Endothelial cell of umbilical vein (primary cell): ENCODE measurements at regions of chr3 and their contacts with region 1.

Region 1: DNA sequence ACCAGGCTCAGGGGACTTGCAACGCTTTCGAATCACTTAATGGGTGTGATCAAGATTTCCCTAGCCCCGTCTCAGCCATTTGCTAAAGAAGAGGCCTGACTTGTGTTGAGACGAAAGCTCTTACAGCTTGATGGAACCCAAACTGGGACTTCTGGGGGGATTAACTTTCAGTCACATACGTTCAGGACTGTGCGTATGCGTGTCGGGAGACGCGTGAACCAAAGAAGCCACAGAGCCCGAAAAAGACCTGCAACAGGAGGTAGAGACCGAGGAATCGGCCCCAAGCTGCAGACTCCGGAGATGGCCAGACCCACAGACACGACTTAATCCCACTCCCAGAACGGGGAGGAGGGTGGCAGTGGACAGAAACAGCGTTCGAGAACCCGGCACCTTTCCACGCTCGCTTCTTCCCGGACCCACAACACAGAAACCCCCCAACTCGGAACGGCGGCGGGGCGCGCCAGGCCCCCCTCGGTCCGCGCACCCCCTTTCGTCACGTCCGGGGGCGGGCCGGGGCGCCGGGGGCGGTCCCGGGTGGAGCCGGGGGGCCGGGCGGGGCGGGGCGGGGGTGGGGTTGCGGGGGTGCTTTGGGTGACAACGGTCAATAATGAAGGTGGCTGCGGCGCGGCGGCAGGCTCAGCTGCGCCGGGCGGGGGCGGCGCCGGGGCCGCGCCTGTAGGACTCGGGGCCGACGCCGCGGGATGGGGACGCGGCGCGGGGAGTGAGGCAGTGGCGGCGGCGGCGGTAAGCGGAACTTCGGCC is at the start of gene ATP11B:
- DNase-seq: peak; percentile 79
- H3K4me3 ChIP-seq: peak within 1 kb of the TSS; percentile 69 to 90 (median 74)
- H3K27ac ChIP-seq: peak within 1 kb of the TSS; percentile 74
- H3K4me1 ChIP-seq: peaks cover 32% of the 10 kb centered on the region
- H3K27me3 ChIP-seq: no peaks in the 10 kb centered on the region
- CTCF ChIP-seq: no peak
- POLR2A ChIP-seq: peak; percentile 80
- total RNA-seq, gene ATP11B: 49.3 and 62.3 TPM in 2 replicates

Region 2: DNA sequence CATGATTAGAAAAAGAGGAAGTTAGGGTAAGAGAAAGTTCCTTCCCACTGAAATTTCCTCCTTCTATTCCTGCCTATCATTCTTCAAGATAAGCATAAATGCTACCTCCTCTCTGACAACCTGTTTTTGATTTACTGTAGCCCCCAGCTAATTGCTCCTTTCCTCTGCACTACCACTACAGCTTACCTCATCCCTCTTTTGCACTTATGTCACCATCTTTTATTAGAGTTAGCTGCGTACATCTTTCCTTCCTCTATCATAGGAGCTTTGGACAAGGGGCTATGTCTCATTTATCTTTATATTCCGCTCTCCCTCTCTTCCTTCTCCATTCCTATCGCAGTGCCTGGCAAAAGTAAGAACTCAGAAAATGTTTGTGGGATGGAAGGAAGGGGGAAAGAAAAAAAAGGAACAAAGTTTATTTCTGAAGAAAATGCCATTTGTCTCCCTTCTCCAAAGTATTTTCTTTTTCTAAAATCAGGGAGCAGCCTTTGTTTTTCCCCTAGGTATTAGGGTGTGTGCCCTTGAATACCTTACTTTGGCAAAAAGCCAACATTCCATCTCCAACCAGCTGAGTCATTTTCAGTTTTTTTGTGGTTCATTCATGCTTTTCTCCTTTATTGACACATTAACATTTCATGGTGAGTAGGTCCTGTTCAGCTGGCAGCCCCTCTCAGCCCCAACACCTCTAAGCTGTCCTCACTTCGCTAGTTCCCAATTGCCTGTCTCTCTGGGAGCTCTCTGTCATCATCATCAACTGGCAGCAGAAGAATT is 1169.0 kb before region 1 on chr3:
- CTCF ChIA-PET with region 1: no interaction called
- POLR2A ChIA-PET with region 1: no interaction called
- dilution Hi-C with region 1: no loop called
- intact Hi-C with region 1: loop called (anchors 10 kb)
- DNase-seq: peak; percentile 81
- H3K4me3 ChIP-seq: peak overlapping the region in 1 of 3 experiments; percentile 26
- H3K27ac ChIP-seq: peak overlapping the region; percentile 88
- H3K4me1 ChIP-seq: peaks cover 42% of the 10 kb centered on the region
- H3K27me3 ChIP-seq: no peaks in the 10 kb centered on the region
- CTCF ChIP-seq: no peak
- POLR2A ChIP-seq: no peak

Region 3: DNA sequence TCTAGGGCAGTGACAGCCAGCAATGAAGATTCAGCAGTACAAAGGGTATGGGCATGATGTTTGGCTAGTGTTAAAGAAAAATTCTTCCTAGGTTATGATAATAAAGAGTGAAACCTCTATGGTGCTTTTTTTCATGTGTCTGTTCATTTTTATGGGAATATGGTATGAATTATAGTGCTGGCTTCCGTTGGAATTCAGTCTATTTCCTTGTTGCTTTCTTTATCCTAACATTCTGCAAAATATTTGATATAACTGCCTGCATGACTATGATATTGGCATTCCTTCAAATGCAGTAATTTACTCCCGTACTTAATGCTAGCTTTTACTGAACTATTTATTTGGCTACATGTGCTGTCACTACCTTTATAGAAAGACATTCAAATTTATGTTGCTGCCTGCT is 57.4 kb before region 1 on chr3:
- CTCF ChIA-PET with region 1: interaction called, 3 read pairs
- POLR2A ChIA-PET with region 1: no interaction called
- dilution Hi-C with region 1: no loop called
- intact Hi-C with region 1: loop called (anchors 1 kb)
- DNase-seq: peak; percentile 79
- H3K4me3 ChIP-seq: no peak overlapping the region
- H3K27ac ChIP-seq: peak overlapping the region; percentile 52
- H3K4me1 ChIP-seq: peaks cover 11% of the 10 kb centered on the region
- H3K27me3 ChIP-seq: no peaks in the 10 kb centered on the region
- CTCF ChIP-seq: no peak
- POLR2A ChIP-seq: no peak

Region 4: GRCh38 chr3:182755308-182755707 is 37.8 kb before region 1 on chr3:
- CTCF ChIA-PET with region 1: interaction called, 4 read pairs
- POLR2A ChIA-PET with region 1: no interaction called
- dilution Hi-C with region 1: no loop called
- intact Hi-C with region 1: loop called (anchors 1 kb)
- DNase-seq: peak; percentile 56
- H3K4me3 ChIP-seq: no peak overlapping the region
- H3K27ac ChIP-seq: peak overlapping the region; percentile 60
- H3K4me1 ChIP-seq: peaks cover 17% of the 10 kb centered on the region
- H3K27me3 ChIP-seq: no peaks in the 10 kb centered on the region
- CTCF ChIP-seq: no peak
- POLR2A ChIP-seq: no peak

Region 5: GRCh38 chr3:182810574-182811268 is 17.6 kb after region 1 on chr3:
- CTCF ChIA-PET with region 1: interaction called, 3 read pairs
- POLR2A ChIA-PET with region 1: no interaction called
- dilution Hi-C with region 1: no loop called
- intact Hi-C with region 1: loop called (anchors 2 kb)
- DNase-seq: peak; percentile 59
- H3K4me3 ChIP-seq: no peak overlapping the region
- H3K27ac ChIP-seq: peak overlapping the region; percentile 26
- H3K4me1 ChIP-seq: peaks cover 20% of the 10 kb centered on the region
- H3K27me3 ChIP-seq: no peaks in the 10 kb centered on the region
- CTCF ChIP-seq: no peak
- POLR2A ChIP-seq: no peak

Region 6: GRCh38 chr3:182837855-182838454 is 44.9 kb after region 1 on chr3:
- CTCF ChIA-PET with region 1: interaction called, 12 read pairs
- POLR2A ChIA-PET with region 1: no interaction called
- dilution Hi-C with region 1: no loop called
- intact Hi-C with region 1: loop called (anchors 2 kb)
- DNase-seq: peak; percentile 51
- H3K4me3 ChIP-seq: no peak overlapping the region
- H3K27ac ChIP-seq: no peak overlapping the region
- H3K4me1 ChIP-seq: peaks cover 1% of the 10 kb centered on the region
- H3K27me3 ChIP-seq: no peaks in the 10 kb centered on the region
- CTCF ChIP-seq: peak; percentile 21 to 34
- POLR2A ChIP-seq: no peak